Stomach (tissue), 19 donors: ENCODE measurements at regions of chrX and their contacts with region 1.

Region 1: GRCh38 chrX:40651620-40652223 is 4.4 kb upstream of the CXorf38 start:
- DNase-seq: peak; percentile 77 to 89
- H3K4me3 ChIP-seq: no peak overlapping the region
- H3K27ac ChIP-seq: no peak overlapping the region
- H3K4me1 ChIP-seq: peaks cover 0 to 13% (median 2%) of the 10 kb centered on the region in 4 donors
- H3K27me3 ChIP-seq: peaks cover 0 to under 1% (median 0%) of the 10 kb centered on the region in 3 donors
- CTCF ChIP-seq: peak in 5 of 7 experiments; percentile 34 to 87 (median 66)
- EP300 ChIP-seq: no peak
- POLR2A ChIP-seq: no peak

Region 2: GRCh38 chrX:40262157-40263013 is 389.3 kb before region 1 on chrX:
- intact Hi-C with region 1: no loop called
- DNase-seq: peak in 1 of 2 donors; percentile 75
- H3K4me3 ChIP-seq: no peak overlapping the region
- H3K27ac ChIP-seq: peak overlapping the region; percentile 4 to 48 (median 35)
- H3K4me1 ChIP-seq: peaks cover 4 to 26% (median 16%) of the 10 kb centered on the region in 4 donors
- H3K27me3 ChIP-seq: peaks cover 0 to 5% (median 0%) of the 10 kb centered on the region in 3 donors
- CTCF ChIP-seq: no peak
- EP300 ChIP-seq: no peak
- POLR2A ChIP-seq: no peak

Region 3: GRCh38 chrX:40792433-40792832 is 140.7 kb after region 1 on chrX:
- intact Hi-C with region 1: loop called (anchors 10 kb)
- DNase-seq: no peak
- H3K4me3 ChIP-seq: no peak overlapping the region
- H3K27ac ChIP-seq: no peak overlapping the region
- H3K4me1 ChIP-seq: peaks cover 0 to 8% (median 0%) of the 10 kb centered on the region in 4 donors
- H3K27me3 ChIP-seq: no peaks in the 10 kb centered on the region
- CTCF ChIP-seq: no peak
- EP300 ChIP-seq: no peak
- POLR2A ChIP-seq: no peak

Region 4: GRCh38 chrX:41802958-41803357 is 1151.2 kb after region 1 on chrX:
- intact Hi-C with region 1: no loop called
- DNase-seq: no peak
- H3K4me3 ChIP-seq: no peak overlapping the region
- H3K27ac ChIP-seq: no peak overlapping the region
- H3K4me1 ChIP-seq: no peaks in the 10 kb centered on the region
- H3K27me3 ChIP-seq: no peaks in the 10 kb centered on the region
- CTCF ChIP-seq: no peak
- EP300 ChIP-seq: no peak
- POLR2A ChIP-seq: no peak